HepG2 (cell line): ENCODE measurements at regions of chr13 and their contacts with region 1.

Region 1: GRCh38 chr13:29771247-29771646 is 79.2 kb downstream of the UBL3 start:
- DNase-seq: peak; percentile 23
- ATAC-seq: peak; percentile 25; the same call in 1 of the 3 replicates
- H3K4me3 ChIP-seq: no peak overlapping the region
- H3K27ac ChIP-seq: no peak overlapping the region
- H3K4me1 ChIP-seq: no peaks in the 10 kb centered on the region
- H3K27me3 ChIP-seq: no peaks in the 10 kb centered on the region
- CTCF ChIP-seq: peak; percentile 41
- EP300 ChIP-seq: no peak
- POLR2A ChIP-seq: no peak
- RAD21 ChIP-seq: no peak

Region 2: GRCh38 chr13:29625017-29625416 is 146.2 kb before region 1 on chr13:
- CTCF ChIA-PET with region 1: no interaction called
- POLR2A ChIA-PET with region 1: no interaction called
- in situ Hi-C with region 1: no loop called
- intact Hi-C with region 1: no loop called
- DNase-seq: no peak
- ATAC-seq: no peak
- H3K4me3 ChIP-seq: no peak overlapping the region
- H3K27ac ChIP-seq: no peak overlapping the region
- H3K4me1 ChIP-seq: no peaks in the 10 kb centered on the region
- H3K27me3 ChIP-seq: no peaks in the 10 kb centered on the region; a peak in 1 of 5 replicates
- CTCF ChIP-seq: no peak
- EP300 ChIP-seq: no peak
- POLR2A ChIP-seq: no peak
- RAD21 ChIP-seq: no peak

Region 3: GRCh38 chr13:29844441-29844840 is 73.2 kb after region 1 on chr13:
- CTCF ChIA-PET with region 1: no interaction called
- POLR2A ChIA-PET with region 1: no interaction called
- in situ Hi-C with region 1: no loop called
- intact Hi-C with region 1: loop called (anchors 5 kb)
- DNase-seq: no peak
- ATAC-seq: no peak
- H3K4me3 ChIP-seq: no peak overlapping the region
- H3K27ac ChIP-seq: no peak overlapping the region
- H3K4me1 ChIP-seq: peaks cover 41% of the 10 kb centered on the region
- H3K27me3 ChIP-seq: no peaks in the 10 kb centered on the region; a peak in 1 of 5 replicates
- CTCF ChIP-seq: no peak
- EP300 ChIP-seq: no peak
- POLR2A ChIP-seq: no peak
- RAD21 ChIP-seq: no peak

Region 4: GRCh38 chr13:29923554-29924481 is 152.6 kb after region 1 on chr13:
- CTCF ChIA-PET with region 1: interaction called, 7 read pairs
- POLR2A ChIA-PET with region 1: interaction called, 4 read pairs
- in situ Hi-C with region 1: loop called (anchors 10 kb)
- intact Hi-C with region 1: loop called (anchors 2 kb)
- DNase-seq: peak; percentile 99
- ATAC-seq: peak; percentile 96
- H3K4me3 ChIP-seq: peak overlapping the region; percentile 22 to 65 (median 34); a peak in 4 of 6 replicates
- H3K27ac ChIP-seq: peak overlapping the region; percentile 81
- H3K4me1 ChIP-seq: peaks cover 67% of the 10 kb centered on the region
- H3K27me3 ChIP-seq: no peaks in the 10 kb centered on the region
- CTCF ChIP-seq: peak; percentile 93
- EP300 ChIP-seq: peak in 1 of 2 experiments; percentile 91; a peak in 2 of 4 replicates
- POLR2A ChIP-seq: peak in 1 of 2 experiments; percentile 75; a peak in 2 of 4 replicates
- RAD21 ChIP-seq: peak; percentile 90